CD4-positive, alpha-beta memory T cell (primary cell): ENCODE measurements at regions of chr15 and their contacts with region 1.

Region 1: GRCh38 chr15:60006203-60006862 is 2.2 kb downstream of the FOXB1 start:
- DNase-seq: peak; percentile 62 to 77 (median 76)
- H3K4me3 ChIP-seq: peak overlapping the region; percentile 45 to 66
- H3K4me3 Mint-ChIP-seq: peak overlapping the region; percentile 86 to 95 (median 89)
- H3K27ac ChIP-seq: no peak overlapping the region
- H3K27ac Mint-ChIP-seq: peak overlapping the region; percentile 4 to 96 (median 82)
- H3K4me1 ChIP-seq: peaks cover 40% of the 10 kb centered on the region
- H3K4me1 Mint-ChIP-seq: peaks cover 22 to 50% (median 27%) of the 10 kb centered on the region in 4 donors
- H3K27me3 ChIP-seq: peaks cover 85% of the 10 kb centered on the region
- H3K27me3 Mint-ChIP-seq: peaks cover 73 to 77% of the 10 kb centered on the region in 2 donors

Region 2: DNA sequence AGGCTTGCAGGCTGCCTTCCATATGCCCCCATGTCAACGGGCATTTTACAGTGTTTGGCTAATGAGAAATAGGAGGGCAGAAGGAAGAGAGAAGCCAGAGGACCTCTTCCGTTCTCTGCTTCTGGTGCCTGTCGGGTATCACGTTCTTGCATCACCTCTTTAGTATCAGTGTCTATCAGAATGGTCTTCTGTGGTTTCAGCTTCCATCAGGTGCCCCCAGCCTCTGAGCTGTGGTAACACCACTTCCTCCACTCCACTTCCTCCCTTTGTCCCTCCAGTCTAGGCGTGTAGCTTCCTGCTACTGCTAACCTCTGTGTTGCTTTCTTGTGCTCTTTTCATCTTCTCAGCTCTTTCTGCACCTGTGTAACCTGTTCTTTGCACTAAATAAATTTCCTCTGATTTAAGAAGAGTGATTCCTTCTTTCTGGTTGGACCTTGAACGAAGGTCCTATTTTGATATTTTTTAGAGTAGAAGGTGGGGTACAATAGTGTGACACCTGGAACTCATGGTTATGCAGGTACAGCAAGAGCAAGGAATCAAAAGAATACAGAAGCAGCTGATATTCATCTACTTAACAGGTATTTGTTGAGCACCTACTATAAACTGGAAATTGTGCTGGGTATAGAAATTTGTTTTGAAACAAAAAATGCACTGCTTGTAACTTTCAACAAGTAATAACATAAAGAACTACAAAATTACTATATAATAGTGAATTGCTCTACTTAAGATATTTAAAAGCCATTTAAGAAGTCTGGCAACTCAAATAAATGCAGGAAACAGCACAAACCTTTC is 29.7 kb before region 1 on chr15:
- CTCF ChIA-PET with region 1: no interaction called
- POLR2A ChIA-PET with region 1: interaction called, 11 read pairs
- intact Hi-C with region 1: no loop called
- DNase-seq: peak; percentile 78 to 87 (median 82)
- H3K4me3 ChIP-seq: no peak overlapping the region
- H3K4me3 Mint-ChIP-seq: peak overlapping the region; percentile 25 to 77 (median 52)
- H3K27ac ChIP-seq: no peak overlapping the region
- H3K27ac Mint-ChIP-seq: peak overlapping the region; percentile 34 to 87 (median 53)
- H3K4me1 ChIP-seq: peaks cover 28% of the 10 kb centered on the region
- H3K4me1 Mint-ChIP-seq: peaks cover 21 to 34% (median 23%) of the 10 kb centered on the region in 4 donors
- H3K27me3 ChIP-seq: no peaks in the 10 kb centered on the region
- H3K27me3 Mint-ChIP-seq: peaks cover 0 to 2% of the 10 kb centered on the region in 2 donors

Region 3: GRCh38 chr15:60128000-60128376 is 121.7 kb after region 1 on chr15:
- CTCF ChIA-PET with region 1: no interaction called
- POLR2A ChIA-PET with region 1: interaction called, 7 read pairs
- intact Hi-C with region 1: loop called (anchors 5 kb)
- DNase-seq: no peak
- H3K4me3 ChIP-seq: peak overlapping the region; percentile 56 to 81
- H3K4me3 Mint-ChIP-seq: peak overlapping the region; percentile 74 to 94 (median 92)
- H3K27ac ChIP-seq: peak overlapping the region; percentile 58
- H3K27ac Mint-ChIP-seq: peak overlapping the region; percentile 92 to 97 (median 96)
- H3K4me1 ChIP-seq: peaks cover 28% of the 10 kb centered on the region
- H3K4me1 Mint-ChIP-seq: peaks cover 19 to 45% (median 33%) of the 10 kb centered on the region in 4 donors
- H3K27me3 ChIP-seq: no peaks in the 10 kb centered on the region
- H3K27me3 Mint-ChIP-seq: no peaks in the 10 kb centered on the region